Activated T-helper 1 cell treated with anti-CD3 and anti-CD28 coated beads, Interleukin-12 subunit alpha, Interleukin-12 subunit beta, Interleukin-2, Interleukin-4 antibody, amounts not matched to agents 30 ng/mL and 10 ng/mL and 1 ng/mL, durations not matched to agents 14 hours and 24 hours and 36 hours (primary cell): ENCODE measurements at regions of chr17 and their contacts with region 1.

Region 1: GRCh38 chr17:65100316-65101140 is 36.6 kb upstream of the RGS9 start:
- DNase-seq: peak; percentile 81
- H3K4me3 Mint-ChIP-seq: peak overlapping the region; percentile 90
- H3K27ac Mint-ChIP-seq: peak overlapping the region; percentile 94
- H3K4me1 Mint-ChIP-seq: peaks cover 20% of the 10 kb centered on the region
- H3K27me3 Mint-ChIP-seq: peaks cover 9% of the 10 kb centered on the region

Region 2: GRCh38 chr17:64920026-64920418 is 180.5 kb before region 1 on chr17:
- intact Hi-C with region 1: loop called (anchors 1 kb)
- DNase-seq: no peak
- H3K4me3 Mint-ChIP-seq: peak overlapping the region; percentile 89
- H3K27ac Mint-ChIP-seq: peak overlapping the region; percentile 87
- H3K4me1 Mint-ChIP-seq: peaks cover 21% of the 10 kb centered on the region
- H3K27me3 Mint-ChIP-seq: peaks cover 2% of the 10 kb centered on the region

Region 3: DNA sequence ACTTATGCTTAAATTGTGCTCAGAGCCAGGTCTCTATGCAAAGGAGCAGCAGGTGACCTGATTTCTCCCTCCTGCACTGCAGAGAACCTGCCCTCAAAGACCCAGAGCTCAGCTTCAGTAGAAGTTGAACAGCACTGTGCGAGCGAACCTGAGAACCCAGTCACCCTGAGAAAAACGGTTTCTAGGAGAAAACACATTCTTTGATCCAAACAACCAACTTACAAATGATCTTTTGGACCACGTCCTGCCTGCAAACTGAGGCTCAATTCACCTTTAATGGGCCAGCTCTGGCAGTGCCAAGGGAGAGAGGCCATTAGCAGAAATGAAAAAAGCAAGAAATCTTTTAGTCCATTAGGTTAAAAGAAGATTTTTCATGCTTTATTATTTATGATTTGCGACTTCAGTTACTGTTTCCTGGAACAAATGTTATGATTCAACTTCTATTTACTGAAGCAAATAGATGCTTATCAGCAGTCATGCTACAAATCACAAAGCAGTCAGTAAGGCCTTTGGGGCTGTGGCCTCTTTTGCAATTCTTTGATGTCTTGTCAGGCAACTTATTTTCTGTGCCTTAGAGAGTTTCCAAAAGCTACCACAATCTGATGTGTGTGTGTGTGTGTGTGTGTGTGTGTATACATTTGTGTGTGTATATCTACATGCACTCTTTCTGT is 115.5 kb before region 1 on chr17:
- intact Hi-C with region 1: loop called (anchors 1 kb)
- DNase-seq: peak; percentile 44
- H3K4me3 Mint-ChIP-seq: peak overlapping the region; percentile 82
- H3K27ac Mint-ChIP-seq: peak overlapping the region; percentile 99
- H3K4me1 Mint-ChIP-seq: peaks cover 47% of the 10 kb centered on the region
- H3K27me3 Mint-ChIP-seq: no peaks in the 10 kb centered on the region

Region 4: GRCh38 chr17:65027305-65027704 is 73.2 kb before region 1 on chr17:
- intact Hi-C with region 1: loop called (anchors 1 kb)
- DNase-seq: peak; percentile 31
- H3K4me3 Mint-ChIP-seq: peak overlapping the region; percentile 60
- H3K27ac Mint-ChIP-seq: peak overlapping the region; percentile 91
- H3K4me1 Mint-ChIP-seq: peaks cover 77% of the 10 kb centered on the region
- H3K27me3 Mint-ChIP-seq: no peaks in the 10 kb centered on the region

Region 5: GRCh38 chr17:65122836-65123756 is 22.6 kb after region 1 on chr17:
- intact Hi-C with region 1: loop called (anchors 1 kb)
- DNase-seq: peak; percentile 82
- H3K4me3 Mint-ChIP-seq: peak overlapping the region; percentile 82
- H3K27ac Mint-ChIP-seq: peak overlapping the region; percentile 89
- H3K4me1 Mint-ChIP-seq: peaks cover 32% of the 10 kb centered on the region
- H3K27me3 Mint-ChIP-seq: peaks cover 4% of the 10 kb centered on the region

Region 6: GRCh38 chr17:65154770-65155621 is 54.5 kb after region 1 on chr17:
- intact Hi-C with region 1: no loop called
- DNase-seq: no peak
- H3K4me3 Mint-ChIP-seq: no peak overlapping the region
- H3K27ac Mint-ChIP-seq: no peak overlapping the region
- H3K4me1 Mint-ChIP-seq: peaks cover 15% of the 10 kb centered on the region
- H3K27me3 Mint-ChIP-seq: peaks cover 6% of the 10 kb centered on the region

Region 7: GRCh38 chr17:65198653-65199382 is 98.3 kb after region 1 on chr17:
- intact Hi-C with region 1: loop called (anchors 1 kb)
- DNase-seq: no peak
- H3K4me3 Mint-ChIP-seq: no peak overlapping the region
- H3K27ac Mint-ChIP-seq: peak overlapping the region; percentile 9
- H3K4me1 Mint-ChIP-seq: peaks cover 14% of the 10 kb centered on the region
- H3K27me3 Mint-ChIP-seq: peaks cover 6% of the 10 kb centered on the region

Region 8: DNA sequence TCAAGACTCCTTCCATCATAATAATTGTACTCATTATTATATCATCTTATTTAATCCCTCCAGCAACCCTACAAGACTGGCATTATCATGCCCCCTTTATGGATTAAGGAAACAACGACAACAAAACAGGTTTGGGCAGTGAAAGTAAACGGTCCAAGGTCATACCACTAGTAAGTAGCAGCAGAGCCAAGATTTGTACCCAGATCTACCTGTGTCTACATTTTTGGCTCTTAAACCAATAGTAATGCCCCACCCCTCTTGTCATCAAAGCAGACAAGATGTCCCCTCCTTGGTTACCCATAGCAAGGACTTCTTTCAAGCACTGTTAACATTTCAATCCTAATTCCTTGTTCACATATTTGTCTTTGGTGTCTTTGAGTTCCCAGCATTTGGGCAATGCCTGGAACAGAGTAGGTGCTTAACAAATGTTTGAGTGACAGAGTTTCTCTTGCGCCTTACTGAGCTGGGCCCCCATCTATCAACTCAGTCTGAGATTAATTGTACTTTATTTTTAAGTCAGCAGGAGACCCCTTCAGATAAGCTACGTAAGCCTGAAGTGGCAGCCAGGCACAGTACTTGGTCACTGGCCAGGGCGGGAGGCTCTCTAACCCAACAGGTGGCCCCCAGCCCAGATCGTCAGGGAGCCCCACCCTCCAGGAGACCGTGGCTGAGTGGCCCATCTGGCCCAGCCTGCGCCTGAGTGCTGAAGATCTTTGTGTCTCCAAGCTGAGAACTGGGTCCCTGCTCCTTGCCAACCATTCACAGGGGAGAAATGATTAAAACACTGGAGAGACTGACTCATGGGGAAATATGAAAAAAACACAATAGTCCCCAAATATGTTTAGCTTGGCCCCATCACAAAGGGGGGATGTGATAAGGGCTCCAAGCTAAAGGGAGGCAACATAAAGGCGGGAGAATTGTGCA is 385.1 kb after region 1 on chr17:
- intact Hi-C with region 1: no loop called
- DNase-seq: no peak
- H3K4me3 Mint-ChIP-seq: no peak overlapping the region
- H3K27ac Mint-ChIP-seq: no peak overlapping the region
- H3K4me1 Mint-ChIP-seq: peaks cover 6% of the 10 kb centered on the region
- H3K27me3 Mint-ChIP-seq: peaks cover 5% of the 10 kb centered on the region